Left cardiac atrium (tissue), 4 donors: ENCODE measurements at regions of chr14 and their contacts with region 1.

Region 1: DNA sequence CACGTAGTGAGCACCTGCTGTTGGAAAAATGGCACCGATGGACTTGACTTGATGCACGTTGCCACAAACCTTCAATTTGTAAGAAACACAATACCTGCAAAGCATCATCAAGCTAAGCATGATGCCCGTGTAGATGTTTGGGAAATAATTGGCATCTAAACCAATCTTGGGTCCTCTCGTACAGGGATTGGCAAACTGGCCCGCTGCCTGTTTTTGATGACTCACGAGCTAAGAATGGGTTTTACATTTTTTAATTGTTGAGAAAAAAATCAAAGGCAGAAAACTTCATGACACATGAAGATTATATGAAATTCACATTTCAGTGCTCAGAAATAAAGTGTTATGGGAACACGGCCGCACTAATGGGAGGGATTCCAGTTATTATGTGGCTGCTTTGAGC is 10.9 kb downstream of the MTA1 start:
- DNase-seq: no peak
- ATAC-seq: peak in 1 of 2 donors; percentile 42

Region 2: GRCh38 chr14:105300792-105301533 is 129.6 kb before region 1 on chr14 and contains the start of gene BRF1:
- intact Hi-C with region 1: no loop called
- DNase-seq: peak; percentile 99
- ATAC-seq: peak; percentile 95 to 96
- total RNA-seq, gene BRF1: 18.8 to 20.0 TPM

Region 3: GRCh38 chr14:105389976-105390848 is 40.3 kb before region 1 on chr14:
- intact Hi-C with region 1: loop called in 1 of 2 experiments (anchors 10 kb)
- DNase-seq: peak; percentile 29
- ATAC-seq: peak in 1 of 2 donors; percentile 23

Region 4: DNA sequence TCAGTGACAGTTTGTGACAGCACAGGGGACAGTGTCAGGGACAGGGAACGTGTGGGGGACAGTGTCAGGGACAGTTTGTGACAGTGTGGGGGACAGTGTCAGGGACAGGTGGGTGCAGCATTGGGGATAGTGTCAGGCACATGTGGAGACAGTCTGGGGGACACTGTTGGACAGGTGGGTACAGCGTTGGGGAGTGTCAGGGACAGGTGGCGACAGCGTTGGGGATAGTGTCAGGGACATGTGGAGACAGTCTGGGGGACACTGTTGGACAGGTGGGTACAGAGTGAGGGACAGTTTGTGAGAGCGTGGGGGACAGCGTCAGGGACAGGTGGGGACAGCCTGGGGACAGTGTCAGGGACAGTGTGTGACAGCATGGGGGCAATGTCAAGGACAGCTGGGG is 235.9 kb after region 1 on chr14:
- intact Hi-C with region 1: no loop called
- DNase-seq: no peak
- ATAC-seq: no peak